Esophagus muscularis mucosa (tissue), 4 donors: ENCODE measurements at regions of chr10 and their contacts with region 1.

Region 1: DNA sequence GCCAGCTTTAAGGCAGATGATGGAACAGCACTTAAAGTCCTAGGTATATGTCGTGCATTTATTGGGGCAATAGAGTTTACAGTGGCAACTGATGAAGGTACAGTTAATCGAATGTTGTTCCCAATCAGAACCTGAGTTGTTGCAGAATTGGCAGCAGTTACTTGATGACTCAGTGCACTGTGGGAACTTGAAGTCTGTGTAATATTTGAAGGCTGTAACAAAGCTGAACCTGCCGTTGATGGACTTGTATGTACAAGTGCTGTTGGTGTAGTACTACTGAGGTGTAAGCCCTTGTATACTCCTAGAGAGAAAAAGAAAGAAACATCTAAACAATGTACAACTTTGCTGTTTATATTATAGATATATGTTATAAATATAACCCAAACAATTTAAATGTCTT is 75.3 kb downstream of the EPC1 start:
- DNase-seq: no peak
- H3K4me3 ChIP-seq: no peak overlapping the region
- H3K27ac ChIP-seq: no peak overlapping the region
- H3K4me1 ChIP-seq: peaks cover 0 to 30% (median 16%) of the 10 kb centered on the region in 4 donors
- H3K27me3 ChIP-seq: no peaks in the 10 kb centered on the region
- CTCF ChIP-seq: no peak
- EP300 ChIP-seq: no peak
- POLR2A ChIP-seq: no peak

Region 2: DNA sequence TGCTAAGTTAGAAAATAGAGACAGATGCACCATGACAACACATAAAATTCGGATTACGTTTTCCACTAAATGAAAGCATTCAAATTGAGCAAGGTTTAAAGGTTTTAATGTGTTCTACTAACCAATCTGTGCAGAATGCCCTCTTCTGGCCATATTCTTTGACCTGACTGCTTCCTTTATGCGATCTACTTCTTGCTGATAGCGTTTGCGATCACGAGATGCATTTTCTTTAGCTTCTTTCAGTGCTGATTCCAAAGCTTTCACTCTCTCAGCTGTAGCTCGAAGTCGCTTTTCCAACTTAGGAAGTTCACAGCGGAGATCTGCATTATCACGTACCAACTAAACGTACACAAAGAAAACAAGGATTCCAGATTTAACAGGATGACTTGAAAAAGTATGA is 254.6 kb before region 1 on chr10:
- intact Hi-C with region 1: loop called (anchors 10 kb)
- DNase-seq: no peak
- H3K4me3 ChIP-seq: no peak overlapping the region
- H3K27ac ChIP-seq: no peak overlapping the region
- H3K4me1 ChIP-seq: peaks cover 0 to 16% (median 8%) of the 10 kb centered on the region in 4 donors
- H3K27me3 ChIP-seq: no peaks in the 10 kb centered on the region
- CTCF ChIP-seq: no peak
- EP300 ChIP-seq: no peak
- POLR2A ChIP-seq: no peak

Region 3: DNA sequence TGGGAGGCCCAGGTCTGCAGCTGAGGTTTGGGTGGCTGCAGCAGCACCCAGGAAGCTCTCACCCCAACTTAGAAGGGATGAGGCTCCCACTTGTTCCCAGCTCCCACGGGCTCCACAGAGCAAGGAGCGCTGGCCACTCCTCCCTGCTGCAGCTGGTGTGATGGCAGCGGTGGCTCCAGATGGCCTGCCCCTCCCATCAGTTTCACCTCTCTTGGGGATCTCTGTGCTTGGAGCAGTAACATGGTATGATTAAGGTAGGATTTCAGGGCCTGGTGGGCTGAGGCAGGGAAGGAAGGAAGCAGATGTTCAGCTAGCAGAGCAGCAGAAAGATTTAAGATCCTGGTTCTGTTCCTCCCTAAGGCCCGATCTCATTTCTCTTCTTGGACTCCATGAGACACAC is 148.6 kb before region 1 on chr10:
- intact Hi-C with region 1: no loop called
- DNase-seq: no peak
- H3K4me3 ChIP-seq: no peak overlapping the region
- H3K27ac ChIP-seq: no peak overlapping the region
- H3K4me1 ChIP-seq: no peaks in the 10 kb centered on the region
- H3K27me3 ChIP-seq: no peaks in the 10 kb centered on the region
- CTCF ChIP-seq: no peak
- EP300 ChIP-seq: no peak
- POLR2A ChIP-seq: no peak